ENCODE measurements at regions of chr1 and their contacts with region 1.

Region 1: DNA sequence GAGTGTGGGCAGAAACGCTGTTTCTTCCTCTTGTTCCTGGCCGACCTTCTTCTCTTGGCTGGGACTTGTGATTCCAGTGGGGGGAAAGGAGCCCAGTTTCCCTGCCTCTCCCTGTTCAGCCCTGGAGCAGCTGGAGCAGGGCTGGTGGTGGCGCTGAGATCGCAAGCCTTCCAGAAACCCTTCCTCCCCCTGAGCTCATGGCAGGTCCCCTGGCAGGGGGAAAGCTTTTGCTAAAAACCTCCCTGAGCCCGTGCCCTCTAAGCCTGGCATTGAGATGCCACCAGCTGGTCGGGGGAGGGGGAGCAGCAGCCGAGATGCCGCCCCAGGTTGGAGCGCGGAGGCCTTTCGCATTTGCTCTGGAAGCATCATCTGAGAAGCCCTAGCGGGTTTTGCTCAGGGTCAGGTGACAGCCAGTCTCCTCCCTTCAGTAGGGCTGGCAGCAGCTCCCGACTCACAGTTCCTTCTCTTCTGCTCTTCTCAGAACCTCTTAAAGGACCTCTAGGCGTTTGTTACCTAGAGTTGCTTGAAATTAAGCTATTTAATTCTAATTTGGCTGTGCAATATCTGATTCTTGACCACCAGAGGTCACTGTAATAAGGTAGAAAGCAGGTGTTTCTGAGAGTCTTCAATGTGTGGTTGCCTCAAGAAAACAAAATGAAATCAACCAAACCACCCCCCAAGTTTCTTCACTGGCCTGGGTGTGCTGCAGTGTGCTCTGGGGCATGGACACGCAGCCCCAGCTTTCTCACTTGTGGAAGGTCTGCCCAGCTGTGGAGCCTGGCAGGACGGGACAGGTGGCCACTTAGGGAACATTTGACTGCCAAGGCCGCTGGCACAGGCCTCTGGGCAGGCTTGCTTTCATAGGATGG is 257.3 kb downstream of the CAMTA1 start:
- DNase-seq: no peak
- H3K4me3 Mint-ChIP-seq: no peak overlapping the region
- H3K27ac Mint-ChIP-seq: no peak overlapping the region
- H3K4me1 Mint-ChIP-seq: no peaks in the 10 kb centered on the region
- H3K27me3 Mint-ChIP-seq: peaks cover 5% of the 10 kb centered on the region

Region 2: DNA sequence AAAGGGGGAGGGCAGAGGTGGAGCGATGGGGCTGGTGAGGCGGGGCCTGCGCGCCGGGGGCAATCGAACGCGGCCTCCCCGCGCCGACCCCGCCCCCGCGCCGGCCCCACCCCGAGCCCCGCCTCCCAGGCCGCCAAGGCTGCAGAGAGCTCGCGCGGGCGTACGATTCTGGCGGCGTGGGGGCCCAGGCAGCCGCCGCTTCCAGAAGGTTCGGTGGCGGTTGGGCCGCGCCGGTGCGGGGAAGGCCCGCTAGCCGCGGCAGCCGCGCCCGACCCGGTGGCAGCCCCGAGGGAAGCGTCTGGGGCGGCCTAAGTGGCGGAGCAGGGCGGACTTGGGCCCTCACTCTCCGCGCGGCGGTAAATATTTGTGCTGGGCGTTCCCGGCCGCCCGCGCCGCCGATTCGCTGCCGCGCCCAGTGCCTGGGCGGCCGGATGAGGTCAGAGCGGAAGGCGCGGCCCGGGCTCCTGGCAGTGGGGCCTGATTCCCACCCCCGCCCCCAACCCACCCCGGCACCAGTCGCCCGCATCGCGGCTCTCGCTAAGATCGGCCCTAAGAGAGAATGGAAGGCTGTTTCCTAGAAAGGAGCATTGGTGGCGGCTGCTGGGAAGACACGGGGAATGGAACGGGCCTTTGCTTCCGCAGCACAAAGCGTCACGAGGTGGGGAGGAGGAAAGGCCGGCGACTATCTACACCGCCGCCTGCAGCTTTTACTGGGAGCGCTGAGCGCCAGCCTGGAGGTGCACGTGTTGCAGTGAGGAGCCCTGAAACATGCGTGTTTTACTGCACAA is 649.0 kb before region 1 on chr1 and contains the start of gene ACOT7:
- intact Hi-C with region 1: no loop called
- DNase-seq: peak; percentile 87
- H3K4me3 Mint-ChIP-seq: peak within 1 kb of the TSS; percentile 89
- H3K27ac Mint-ChIP-seq: peak within 1 kb of the TSS; percentile 94
- H3K4me1 Mint-ChIP-seq: peaks cover 35% of the 10 kb centered on the region
- H3K27me3 Mint-ChIP-seq: no peaks in the 10 kb centered on the region
- total RNA-seq, gene ACOT7: 124 and 126 TPM in 2 replicates

Region 3: GRCh38 chr1:7218210-7218832 is 175.8 kb after region 1 on chr1:
- intact Hi-C with region 1: loop called (anchors 1 kb)
- DNase-seq: no peak
- H3K4me3 Mint-ChIP-seq: no peak overlapping the region
- H3K27ac Mint-ChIP-seq: no peak overlapping the region
- H3K4me1 Mint-ChIP-seq: no peaks in the 10 kb centered on the region
- H3K27me3 Mint-ChIP-seq: peaks cover 4% of the 10 kb centered on the region